CD8-positive, alpha-beta T cell (primary cell): ENCODE measurements at regions of chrX and their contacts with region 1.

Region 1: DNA sequence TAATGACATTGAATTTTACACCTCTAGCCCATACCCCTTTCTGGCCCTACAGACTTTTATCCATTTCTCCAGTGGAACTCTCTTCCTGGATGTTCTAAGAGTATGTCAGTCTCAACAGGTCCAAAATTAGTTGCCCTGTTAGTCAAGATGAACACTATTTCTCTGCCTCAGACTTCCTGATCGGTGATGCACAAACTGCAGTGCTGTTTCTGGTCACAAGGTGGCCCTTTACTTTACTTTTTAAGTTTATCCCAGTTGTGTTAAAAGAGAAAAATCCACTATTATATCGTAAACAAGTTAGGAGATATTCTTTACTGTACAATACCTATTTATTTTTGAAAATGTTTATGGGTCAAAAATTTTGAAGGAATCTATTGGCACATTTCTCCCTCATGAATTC is 13.1 kb downstream of the TCEAL7 start:
- DNase-seq: peak in 7 of 9 experiments; percentile 8 to 60 (median 35)
- ATAC-seq: peak; percentile 67
- H3K4me3 ChIP-seq: no peak overlapping the region
- H3K4me3 Mint-ChIP-seq: no peak overlapping the region
- H3K27ac ChIP-seq: no peak overlapping the region
- H3K27ac Mint-ChIP-seq: no peak overlapping the region
- H3K4me1 ChIP-seq: no peaks in the 10 kb centered on the region
- H3K4me1 Mint-ChIP-seq: peaks cover 4% of the 10 kb centered on the region
- H3K27me3 ChIP-seq: no peaks in the 10 kb centered on the region
- H3K27me3 Mint-ChIP-seq: peaks cover 2% of the 10 kb centered on the region
- CTCF ChIP-seq: peak; percentile 47

Region 2: GRCh38 chrX:101977106-101977505 is 1366.0 kb before region 1 on chrX:
- CTCF ChIA-PET with region 1: no interaction called
- POLR2A ChIA-PET with region 1: no interaction called
- intact Hi-C with region 1: no loop called
- DNase-seq: no peak
- ATAC-seq: no peak
- H3K4me3 ChIP-seq: no peak overlapping the region
- H3K4me3 Mint-ChIP-seq: no peak overlapping the region
- H3K27ac ChIP-seq: no peak overlapping the region
- H3K27ac Mint-ChIP-seq: no peak overlapping the region
- H3K4me1 ChIP-seq: no peaks in the 10 kb centered on the region
- H3K4me1 Mint-ChIP-seq: no peaks in the 10 kb centered on the region
- H3K27me3 ChIP-seq: no peaks in the 10 kb centered on the region
- H3K27me3 Mint-ChIP-seq: peaks cover 2% of the 10 kb centered on the region
- CTCF ChIP-seq: no peak

Region 3: DNA sequence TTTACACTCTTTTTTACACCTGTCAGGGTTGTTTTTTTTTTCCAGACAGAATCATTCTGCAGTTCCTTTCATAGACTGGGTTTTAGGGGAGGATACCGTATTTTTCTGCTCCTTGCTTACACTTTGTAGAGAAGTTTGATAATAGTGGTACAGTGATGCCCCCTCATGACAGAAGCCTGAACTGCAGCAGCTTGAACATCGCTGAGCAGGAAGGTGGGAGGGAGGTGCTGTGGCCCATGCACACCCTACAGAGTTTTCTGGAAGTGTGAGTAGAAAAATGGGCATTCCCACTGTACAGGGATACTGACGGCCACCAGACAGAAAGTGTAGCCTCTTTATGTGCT is 121.6 kb after region 1 on chrX:
- CTCF ChIA-PET with region 1: interaction called, 14 read pairs
- POLR2A ChIA-PET with region 1: interaction called, 3 read pairs
- intact Hi-C with region 1: loop called (anchors 1 kb)
- DNase-seq: peak; percentile 49 to 81 (median 68)
- ATAC-seq: peak; percentile 94
- H3K4me3 ChIP-seq: peak overlapping the region; percentile 43 to 45
- H3K4me3 Mint-ChIP-seq: peak overlapping the region; percentile 93
- H3K27ac ChIP-seq: no peak overlapping the region
- H3K27ac Mint-ChIP-seq: peak overlapping the region; percentile 90
- H3K4me1 ChIP-seq: no peaks in the 10 kb centered on the region
- H3K4me1 Mint-ChIP-seq: peaks cover 18% of the 10 kb centered on the region
- H3K27me3 ChIP-seq: no peaks in the 10 kb centered on the region
- H3K27me3 Mint-ChIP-seq: no peaks in the 10 kb centered on the region
- CTCF ChIP-seq: peak; percentile 41

Region 4: GRCh38 chrX:103488794-103489193 is 145.7 kb after region 1 on chrX:
- CTCF ChIA-PET with region 1: interaction called, 5 read pairs
- POLR2A ChIA-PET with region 1: no interaction called
- intact Hi-C with region 1: loop called in 1 of 2 experiments (anchors 1 kb)
- DNase-seq: no peak
- ATAC-seq: no peak
- H3K4me3 ChIP-seq: no peak overlapping the region
- H3K4me3 Mint-ChIP-seq: no peak overlapping the region
- H3K27ac ChIP-seq: no peak overlapping the region
- H3K27ac Mint-ChIP-seq: no peak overlapping the region
- H3K4me1 ChIP-seq: no peaks in the 10 kb centered on the region
- H3K4me1 Mint-ChIP-seq: peaks cover 2% of the 10 kb centered on the region
- H3K27me3 ChIP-seq: no peaks in the 10 kb centered on the region
- H3K27me3 Mint-ChIP-seq: no peaks in the 10 kb centered on the region
- CTCF ChIP-seq: no peak